Activated T-helper 1 cell treated with anti-CD3 and anti-CD28 coated beads, Interleukin-12 subunit alpha, Interleukin-12 subunit beta, Interleukin-2, Interleukin-4 antibody, amounts not matched to agents 30 ng/mL and 10 ng/mL and 1 ng/mL, durations not matched to agents 14 hours and 24 hours and 36 hours (primary cell): ENCODE measurements at regions of chr18 and their contacts with region 1.

Region 1: GRCh38 chr18:63016270-63016669 is 300.9 kb downstream of the PHLPP1 start:
- DNase-seq: no peak
- H3K4me3 Mint-ChIP-seq: no peak overlapping the region
- H3K27ac Mint-ChIP-seq: no peak overlapping the region
- H3K4me1 Mint-ChIP-seq: no peaks in the 10 kb centered on the region
- H3K27me3 Mint-ChIP-seq: peaks cover 65% of the 10 kb centered on the region

Region 2: GRCh38 chr18:62118328-62118727 is 897.9 kb before region 1 on chr18:
- intact Hi-C with region 1: no loop called
- DNase-seq: no peak
- H3K4me3 Mint-ChIP-seq: no peak overlapping the region
- H3K27ac Mint-ChIP-seq: no peak overlapping the region
- H3K4me1 Mint-ChIP-seq: no peaks in the 10 kb centered on the region
- H3K27me3 Mint-ChIP-seq: no peaks in the 10 kb centered on the region

Region 3: DNA sequence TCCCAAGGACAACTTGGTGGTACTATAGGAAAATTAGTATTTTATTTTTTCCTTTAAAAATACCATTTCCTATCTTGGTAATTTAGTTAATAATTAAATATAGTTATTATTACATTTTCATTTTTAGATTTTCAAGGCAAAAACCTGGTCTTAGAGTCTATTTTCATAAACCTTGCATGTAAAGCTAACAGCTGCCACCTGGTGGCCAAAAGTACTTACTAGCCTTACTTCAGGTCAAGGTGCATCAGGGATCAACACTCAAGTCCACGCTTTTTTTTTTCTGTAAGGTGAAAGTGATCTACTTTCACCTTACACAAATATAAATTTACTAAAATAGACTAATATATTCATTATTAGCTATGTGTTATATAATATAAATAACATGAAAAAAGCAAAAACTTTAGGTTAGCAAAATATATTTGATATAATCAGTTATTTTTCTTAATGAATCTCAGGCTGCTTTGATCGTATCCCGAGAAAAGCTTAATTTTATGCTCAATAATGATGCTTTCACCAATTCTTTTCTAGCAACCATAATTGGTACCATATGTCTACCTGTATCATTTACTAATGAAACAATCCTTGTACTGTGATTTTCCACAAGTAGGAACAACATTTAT is 766.7 kb before region 1 on chr18:
- intact Hi-C with region 1: no loop called
- DNase-seq: peak; percentile 38
- H3K4me3 Mint-ChIP-seq: no peak overlapping the region
- H3K27ac Mint-ChIP-seq: no peak overlapping the region
- H3K4me1 Mint-ChIP-seq: no peaks in the 10 kb centered on the region
- H3K27me3 Mint-ChIP-seq: no peaks in the 10 kb centered on the region

Region 4: GRCh38 chr18:63074981-63075404 is 58.7 kb after region 1 on chr18:
- intact Hi-C with region 1: loop called (anchors 1 kb)
- DNase-seq: peak; percentile 38
- H3K4me3 Mint-ChIP-seq: peak overlapping the region; percentile 66
- H3K27ac Mint-ChIP-seq: no peak overlapping the region
- H3K4me1 Mint-ChIP-seq: peaks cover 18% of the 10 kb centered on the region
- H3K27me3 Mint-ChIP-seq: peaks cover 24% of the 10 kb centered on the region

Region 5: DNA sequence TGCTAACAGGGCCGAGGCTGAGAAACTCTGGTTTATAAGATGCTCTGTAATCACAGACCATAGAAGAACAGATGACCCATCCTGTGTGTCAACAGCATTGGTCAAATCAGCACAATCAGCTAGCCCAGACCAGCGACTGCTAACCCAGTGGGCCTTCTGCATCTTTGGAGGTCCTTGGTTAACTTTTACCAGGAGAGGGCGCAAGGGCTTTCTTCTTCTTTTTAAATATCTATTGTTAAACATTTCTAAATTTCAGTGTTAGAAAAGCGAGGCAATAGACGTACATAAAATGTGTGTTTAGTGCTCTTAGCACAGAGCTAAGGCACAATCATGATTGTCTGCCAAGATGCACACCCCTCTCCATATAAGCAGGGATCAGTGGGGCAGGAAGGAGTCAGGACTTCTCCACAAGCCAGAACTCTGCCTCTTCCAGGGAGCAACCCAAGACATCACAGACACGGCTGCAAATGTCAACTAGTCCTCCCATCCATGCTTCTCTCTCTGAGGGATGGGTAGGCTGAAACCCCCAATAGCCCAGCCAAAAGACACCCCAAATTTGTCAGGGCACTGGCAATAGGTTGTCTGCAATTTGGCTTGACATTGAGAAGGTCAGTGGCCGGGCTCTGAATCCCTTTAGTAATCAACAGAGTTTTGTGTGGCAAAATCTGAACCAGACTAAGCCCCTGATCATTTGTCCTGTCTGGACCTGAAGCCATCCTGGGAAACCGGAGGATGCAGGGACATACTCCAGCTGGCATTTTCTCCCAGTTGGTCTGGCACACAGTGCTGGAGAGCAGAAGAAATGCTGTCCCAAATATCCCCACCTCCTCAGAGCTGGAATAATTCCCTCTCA is 115.1 kb after region 1 on chr18:
- intact Hi-C with region 1: loop called (anchors 5 kb)
- DNase-seq: peak; percentile 24
- H3K4me3 Mint-ChIP-seq: no peak overlapping the region
- H3K27ac Mint-ChIP-seq: peak overlapping the region; percentile 18
- H3K4me1 Mint-ChIP-seq: peaks cover 31% of the 10 kb centered on the region
- H3K27me3 Mint-ChIP-seq: no peaks in the 10 kb centered on the region

Region 6: DNA sequence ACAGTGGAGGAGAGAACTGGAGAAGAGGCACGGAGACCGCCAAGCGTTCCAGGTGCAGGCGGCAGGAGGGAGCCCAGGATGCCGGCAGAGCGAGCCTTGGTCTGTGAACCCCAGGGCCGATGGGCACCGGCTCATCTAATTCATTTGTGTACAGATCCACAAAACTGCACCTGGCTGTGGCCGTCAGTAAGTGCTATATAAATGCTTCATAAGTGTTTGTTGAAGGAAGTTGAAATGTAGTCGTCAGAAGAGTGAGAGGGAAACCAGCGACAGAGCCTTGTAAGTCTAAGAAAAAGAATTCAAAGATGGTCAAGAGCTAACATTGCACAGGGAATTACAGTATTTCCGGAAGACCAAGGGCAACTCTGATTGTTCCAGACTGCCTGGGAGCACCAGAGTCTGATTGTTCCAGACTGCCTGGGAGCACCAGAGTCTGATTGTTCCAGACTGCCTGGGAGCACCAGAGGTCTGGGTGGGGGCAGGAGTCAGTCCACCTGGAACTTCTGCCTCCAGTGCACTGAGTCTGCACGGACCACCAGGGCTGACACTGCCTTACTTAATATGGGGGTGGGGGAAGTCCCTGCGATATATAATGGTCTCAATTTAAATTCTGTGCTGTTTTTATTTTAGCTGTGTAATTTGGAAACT is 191.0 kb after region 1 on chr18:
- intact Hi-C with region 1: loop called (anchors 5 kb)
- DNase-seq: no peak
- H3K4me3 Mint-ChIP-seq: peak overlapping the region; percentile 87
- H3K27ac Mint-ChIP-seq: peak overlapping the region; percentile 89
- H3K4me1 Mint-ChIP-seq: peaks cover 93% of the 10 kb centered on the region
- H3K27me3 Mint-ChIP-seq: no peaks in the 10 kb centered on the region

Region 7: DNA sequence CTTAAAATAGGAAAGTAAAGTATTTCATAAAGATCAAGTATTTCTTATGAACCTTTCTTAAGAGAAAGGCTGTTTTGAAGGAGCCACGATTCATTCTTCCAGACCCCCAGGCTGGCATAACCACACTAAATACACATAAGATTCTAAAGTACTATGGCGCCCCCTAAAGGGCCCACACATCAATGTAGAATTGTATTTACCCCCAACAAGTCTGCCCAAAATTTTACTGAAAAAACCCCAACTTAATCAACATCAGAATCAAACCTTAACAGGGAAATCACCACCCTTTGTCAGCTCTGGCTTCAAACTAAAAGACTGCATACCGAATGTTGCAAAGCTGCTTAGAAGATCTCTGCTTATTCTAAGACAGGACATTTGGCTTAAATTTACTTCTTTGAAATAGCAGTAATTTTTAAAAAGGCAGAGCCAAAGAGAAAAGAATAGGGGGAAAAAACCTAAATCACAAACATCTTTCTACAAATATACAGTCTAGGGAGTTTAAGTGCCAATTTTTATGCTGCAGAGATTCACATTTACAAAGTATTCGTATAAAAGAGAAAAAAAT is 323.7 kb after region 1 on chr18:
- intact Hi-C with region 1: loop called (anchors 1 kb)
- DNase-seq: peak; percentile 19
- H3K4me3 Mint-ChIP-seq: no peak overlapping the region
- H3K27ac Mint-ChIP-seq: no peak overlapping the region
- H3K4me1 Mint-ChIP-seq: peaks cover 19% of the 10 kb centered on the region
- H3K27me3 Mint-ChIP-seq: no peaks in the 10 kb centered on the region

Region 8: GRCh38 chr18:63439334-63439733 is 423.1 kb after region 1 on chr18:
- intact Hi-C with region 1: loop called (anchors 1 kb)
- DNase-seq: peak; percentile 19
- H3K4me3 Mint-ChIP-seq: no peak overlapping the region
- H3K27ac Mint-ChIP-seq: no peak overlapping the region
- H3K4me1 Mint-ChIP-seq: peaks cover 6% of the 10 kb centered on the region
- H3K27me3 Mint-ChIP-seq: peaks cover 23% of the 10 kb centered on the region